ENCODE measurements at regions of chr7 and their contacts with region 1.

Region 1: DNA sequence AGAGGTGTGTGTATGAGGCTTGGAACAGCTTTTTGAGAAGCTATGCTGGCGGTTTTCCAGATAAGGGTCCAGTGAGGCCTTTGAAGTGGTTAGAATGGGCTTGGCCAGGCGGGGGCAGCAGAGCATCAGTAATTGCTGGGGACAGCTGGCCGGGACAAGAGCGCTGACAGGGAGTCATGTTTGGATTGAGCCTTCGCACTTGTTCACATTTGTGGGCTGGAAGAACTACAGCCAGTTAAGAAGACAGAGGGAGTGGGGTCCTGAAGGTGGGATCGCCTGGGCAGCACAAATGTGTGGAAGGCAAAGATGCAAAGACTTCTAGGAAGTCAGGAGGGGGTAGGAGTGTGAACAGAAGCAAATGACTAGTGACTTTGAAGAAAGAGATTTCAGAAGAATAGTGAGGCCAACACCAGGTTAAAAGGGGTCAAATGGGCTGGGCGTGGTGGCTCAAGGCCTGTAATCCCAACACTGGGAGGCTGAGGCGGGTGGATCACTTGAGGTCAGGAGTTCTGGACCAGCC is 12.7 kb upstream of the SDHAF3 start:
- DNase-seq: peak; percentile 88
- H3K4me3 ChIP-seq: no peak overlapping the region
- H3K27ac ChIP-seq: no peak overlapping the region
- H3K4me1 ChIP-seq: peaks cover 0 to 6% (median 1%) of the 10 kb centered on the region in 4 donors
- H3K27me3 ChIP-seq: no peaks in the 10 kb centered on the region
- CTCF ChIP-seq: peak; percentile 53 to 76 (median 68)
- EP300 ChIP-seq: no peak
- POLR2A ChIP-seq: no peak

Region 2: DNA sequence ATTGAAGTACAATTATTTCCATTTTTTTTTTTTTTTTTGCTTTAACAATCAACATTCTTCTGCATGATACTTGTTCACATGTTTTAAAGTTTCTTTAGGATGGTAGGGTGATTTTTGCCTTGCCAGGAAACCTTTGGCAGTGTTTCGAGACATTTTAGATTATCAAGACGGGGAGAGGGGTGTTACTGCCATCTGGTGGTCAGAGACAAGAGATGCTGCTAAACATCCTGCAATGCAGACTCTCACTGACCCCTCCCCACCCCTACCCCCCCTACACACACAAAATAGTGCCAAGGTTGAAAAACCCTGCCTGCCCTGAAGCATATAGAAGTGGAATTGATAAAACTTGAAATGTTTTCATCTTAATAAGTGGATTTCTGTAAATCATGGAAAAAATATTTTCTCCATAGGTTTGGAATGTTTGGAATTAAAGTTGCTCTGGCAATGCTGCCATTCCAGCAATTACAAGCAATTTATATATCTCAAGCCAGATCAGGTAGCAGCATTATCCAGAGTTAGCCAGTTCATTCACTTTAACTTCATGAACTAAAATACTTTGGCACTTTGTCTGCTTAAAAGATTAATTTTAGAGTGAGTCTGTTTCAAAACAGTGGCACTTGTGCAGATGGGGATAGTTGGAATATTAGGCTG is 74.8 kb after region 1 on chr7:
- intact Hi-C with region 1: loop called (anchors 1 kb)
- DNase-seq: no peak
- H3K4me3 ChIP-seq: no peak overlapping the region
- H3K27ac ChIP-seq: no peak overlapping the region
- H3K4me1 ChIP-seq: no peaks in the 10 kb centered on the region
- H3K27me3 ChIP-seq: no peaks in the 10 kb centered on the region
- CTCF ChIP-seq: peak; percentile 29 to 78 (median 38)
- EP300 ChIP-seq: no peak
- POLR2A ChIP-seq: no peak

Region 3: DNA sequence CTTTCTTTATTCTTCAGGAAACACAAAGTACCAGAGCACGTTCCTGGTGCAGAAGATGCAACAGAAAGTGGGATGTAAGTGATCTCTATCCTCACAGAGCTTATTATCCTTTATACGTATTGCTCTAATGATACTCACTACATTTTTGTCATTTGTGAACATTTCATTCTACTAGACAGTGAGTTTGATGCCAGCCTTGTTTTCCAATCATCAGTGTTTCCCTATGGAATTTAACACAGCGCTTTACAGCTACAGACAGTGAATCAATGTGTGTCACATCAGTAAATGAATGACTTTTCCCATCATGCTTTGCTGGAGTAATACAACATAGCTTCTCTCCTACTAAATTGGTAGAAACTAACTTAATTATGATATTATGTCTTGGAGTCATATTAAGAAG is 188.3 kb after region 1 on chr7:
- intact Hi-C with region 1: no loop called
- DNase-seq: no peak
- H3K4me3 ChIP-seq: no peak overlapping the region
- H3K27ac ChIP-seq: no peak overlapping the region
- H3K4me1 ChIP-seq: no peaks in the 10 kb centered on the region
- H3K27me3 ChIP-seq: no peaks in the 10 kb centered on the region
- CTCF ChIP-seq: no peak
- EP300 ChIP-seq: no peak
- POLR2A ChIP-seq: no peak

Region 4: DNA sequence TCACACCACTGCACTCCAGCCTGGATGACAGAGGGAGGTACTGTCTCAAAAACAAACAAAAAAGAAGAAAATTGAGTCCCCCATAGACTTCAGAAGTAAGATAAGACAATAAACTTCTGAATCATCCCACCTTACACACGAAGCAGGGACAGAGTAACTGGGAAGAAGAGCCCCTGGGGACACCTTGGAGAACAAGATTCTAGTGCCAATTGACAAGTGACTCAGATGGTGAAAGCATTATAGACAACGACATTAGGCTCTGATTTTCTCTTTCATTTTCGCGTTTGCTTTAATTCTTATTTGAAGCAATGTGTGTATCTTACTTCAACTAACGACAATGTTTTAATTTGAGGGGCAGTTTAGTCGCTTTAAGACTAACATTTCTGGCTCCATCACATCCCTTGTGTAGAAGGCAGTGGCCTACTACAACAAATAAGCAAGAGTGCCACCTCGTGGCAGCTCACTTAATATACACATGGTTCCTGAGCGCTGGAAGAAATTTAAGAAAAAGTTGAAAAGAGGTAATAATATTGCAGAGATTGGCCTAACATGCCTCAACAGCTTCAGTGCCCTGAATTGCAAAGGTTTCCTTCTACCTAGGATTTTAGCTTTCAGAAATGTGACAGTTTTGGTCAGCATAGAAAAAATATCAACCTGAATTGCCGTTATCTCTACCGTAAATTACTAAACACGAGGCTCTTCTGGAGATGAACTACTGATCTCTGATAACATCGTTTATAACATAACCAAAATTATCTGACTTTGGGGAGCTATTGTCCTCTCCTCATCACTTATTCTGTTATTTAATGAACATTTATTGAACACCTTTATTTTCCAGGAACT is 730.7 kb after region 1 on chr7:
- intact Hi-C with region 1: loop called (anchors 10 kb)
- DNase-seq: peak; percentile 68
- H3K4me3 ChIP-seq: no peak overlapping the region
- H3K27ac ChIP-seq: no peak overlapping the region
- H3K4me1 ChIP-seq: no peaks in the 10 kb centered on the region
- H3K27me3 ChIP-seq: peaks cover 0 to 7% (median 0%) of the 10 kb centered on the region in 3 donors
- CTCF ChIP-seq: peak in 2 of 4 experiments; percentile 30 to 69
- EP300 ChIP-seq: no peak
- POLR2A ChIP-seq: no peak

Measured in sigmoid colon (tissue), 7 donors.